IMR-90 (cell line): ENCODE measurements at regions of chr5 and their contacts with region 1.

Region 1: DNA sequence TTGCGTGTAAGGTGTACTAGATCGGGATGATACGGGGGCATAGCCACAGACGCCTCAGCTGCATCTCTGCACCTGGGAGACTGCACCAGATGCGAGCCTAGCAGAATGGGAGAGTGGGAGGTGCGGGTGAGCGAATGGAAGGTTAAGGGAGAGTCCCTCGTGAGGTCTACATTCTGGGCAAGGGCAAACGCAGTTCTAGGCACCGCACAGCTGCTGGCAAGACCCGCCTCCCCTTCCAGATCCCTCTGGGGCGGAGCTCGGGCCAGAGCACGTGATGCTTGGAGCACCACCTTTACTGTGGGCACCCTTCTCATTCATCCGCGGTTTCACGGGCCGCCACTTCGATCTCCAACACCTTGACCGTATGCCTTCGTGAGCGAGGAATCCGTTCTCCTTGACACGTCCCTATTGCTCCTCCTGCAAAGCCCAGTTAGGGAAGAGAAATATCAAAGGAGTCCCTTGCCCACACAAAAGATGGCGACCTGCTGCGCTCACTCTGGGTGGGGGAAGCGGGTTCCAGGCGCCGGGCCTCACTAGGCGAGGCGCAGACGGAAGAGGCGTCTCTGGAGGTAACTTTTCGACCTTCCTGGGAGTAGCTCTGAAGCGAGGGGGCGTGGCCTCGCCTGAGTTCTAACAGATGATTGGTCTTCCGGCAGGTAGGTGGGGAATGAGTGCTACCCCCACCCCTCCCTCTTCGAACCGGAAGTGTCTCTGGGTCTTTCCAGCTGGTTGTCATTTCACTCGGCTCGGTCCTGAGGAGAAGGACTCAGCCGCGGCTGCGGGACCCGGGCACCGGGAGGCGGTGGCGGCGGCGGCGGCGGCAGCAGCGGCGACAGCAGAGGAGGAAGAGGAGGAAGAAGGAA is at the start of gene CPEB4:
- DNase-seq: peak; percentile 99
- ATAC-seq: peak; percentile 97
- H3K4me3 ChIP-seq: peak within 1 kb of the TSS; percentile 59
- H3K27ac ChIP-seq: peak within 1 kb of the TSS; percentile 96
- H3K4me1 ChIP-seq: no peaks in the 10 kb centered on the region; the same call in 1 of the 2 replicates
- H3K27me3 ChIP-seq: no peaks in the 10 kb centered on the region
- CTCF ChIP-seq: no peak
- POLR2A ChIP-seq: peak; percentile 98
- RAD21 ChIP-seq: peak; percentile 1; the same call in 1 of the 2 replicates
- total RNA-seq, gene CPEB4: 22.6 and 24.2 TPM in 2 replicates

Region 2: GRCh38 chr5:173714551-173715428 is 173.1 kb before region 1 on chr5:
- CTCF ChIA-PET with region 1: no interaction called
- POLR2A ChIA-PET with region 1: no interaction called
- dilution Hi-C with region 1: no loop called
- in situ Hi-C with region 1: no loop called
- intact Hi-C with region 1: loop called (anchors 5 kb)
- DNase-seq: peak; percentile 93
- ATAC-seq: peak; percentile 91
- H3K4me3 ChIP-seq: no peak overlapping the region
- H3K27ac ChIP-seq: peak overlapping the region; percentile 31; the same call in 1 of the 2 replicates
- H3K4me1 ChIP-seq: peaks cover 11% of the 10 kb centered on the region
- H3K27me3 ChIP-seq: no peaks in the 10 kb centered on the region
- CTCF ChIP-seq: no peak
- POLR2A ChIP-seq: no peak
- RAD21 ChIP-seq: no peak

Region 3: GRCh38 chr5:173764321-173765029 is 123.4 kb before region 1 on chr5:
- CTCF ChIA-PET with region 1: no interaction called
- POLR2A ChIA-PET with region 1: no interaction called
- dilution Hi-C with region 1: no loop called
- in situ Hi-C with region 1: no loop called
- intact Hi-C with region 1: loop called (anchors 5 kb)
- DNase-seq: peak; percentile 96
- ATAC-seq: peak; percentile 99
- H3K4me3 ChIP-seq: no peak overlapping the region
- H3K27ac ChIP-seq: peak overlapping the region; percentile 59
- H3K4me1 ChIP-seq: peaks cover 7% of the 10 kb centered on the region
- H3K27me3 ChIP-seq: no peaks in the 10 kb centered on the region; the same call in 1 of the 2 replicates
- CTCF ChIP-seq: no peak
- POLR2A ChIP-seq: no peak
- RAD21 ChIP-seq: peak; percentile 11; the same call in 1 of the 2 replicates

Region 4: GRCh38 chr5:173781814-173782670 is 105.8 kb before region 1 on chr5:
- CTCF ChIA-PET with region 1: no interaction called
- POLR2A ChIA-PET with region 1: interaction called, 8 read pairs
- dilution Hi-C with region 1: no loop called
- in situ Hi-C with region 1: no loop called
- intact Hi-C with region 1: loop called (anchors 1 kb)
- DNase-seq: peak; percentile 94
- ATAC-seq: peak; percentile 81
- H3K4me3 ChIP-seq: no peak overlapping the region
- H3K27ac ChIP-seq: peak overlapping the region; percentile 88
- H3K4me1 ChIP-seq: peaks cover 16% of the 10 kb centered on the region
- H3K27me3 ChIP-seq: no peaks in the 10 kb centered on the region
- CTCF ChIP-seq: no peak
- POLR2A ChIP-seq: 0 out of 2 replicates have a peak, but pooled peaks have one; percentile 19
- RAD21 ChIP-seq: no peak